ENCODE measurements at regions of chr4 and their contacts with region 1.

Region 1: DNA sequence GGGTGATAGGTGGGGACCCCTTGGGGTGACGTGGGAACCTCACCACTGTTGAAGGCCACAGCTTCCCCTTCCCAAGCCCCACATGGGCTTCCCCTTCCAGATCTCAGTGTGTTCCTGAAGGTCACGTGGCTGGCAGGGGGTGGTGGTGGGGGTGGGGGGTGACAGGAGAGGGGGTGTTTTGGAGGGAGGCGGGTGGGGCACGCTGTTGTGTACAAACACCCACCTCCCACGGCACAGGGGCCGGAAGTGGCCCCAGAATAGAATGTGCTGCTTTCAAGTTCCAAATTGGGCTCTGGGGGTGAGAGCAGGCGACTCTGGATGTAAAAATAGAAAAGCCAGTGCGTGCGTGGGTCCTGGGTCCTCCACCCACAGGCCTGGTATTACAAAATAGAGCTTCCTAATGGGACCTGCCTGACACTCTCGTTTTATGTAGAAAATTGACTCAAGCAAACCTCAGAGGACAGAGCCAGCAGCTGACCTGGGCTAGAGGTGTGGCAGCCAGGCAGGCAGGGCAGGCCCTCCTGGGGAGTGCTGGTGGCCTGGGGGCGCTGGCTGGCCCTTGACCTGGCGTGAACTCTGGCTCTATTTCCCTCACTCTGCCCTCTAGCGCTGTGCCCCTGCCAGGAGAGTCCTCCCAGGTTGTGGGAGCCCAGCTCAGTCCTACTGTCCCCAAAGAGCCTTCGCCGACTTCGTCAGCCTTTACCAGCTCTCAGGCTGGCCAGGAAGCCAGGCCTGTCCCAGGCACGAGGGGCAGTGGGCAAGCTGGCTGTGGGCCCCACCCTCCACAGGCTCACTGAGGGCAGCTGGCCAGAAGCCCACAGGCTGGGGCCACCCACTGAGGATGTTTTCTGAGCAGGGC is 5.4 kb upstream of the SH3BP2 start:
- DNase-seq: peak; percentile 85
- H3K4me3 Mint-ChIP-seq: peak overlapping the region; percentile 56
- H3K27ac Mint-ChIP-seq: peak overlapping the region; percentile 93
- H3K4me1 Mint-ChIP-seq: peaks cover 33% of the 10 kb centered on the region
- H3K27me3 Mint-ChIP-seq: peaks cover 4% of the 10 kb centered on the region

Region 2: GRCh38 chr4:2755837-2756694 is 31.4 kb before region 1 on chr4 and contains the start of gene TNIP2:
- intact Hi-C with region 1: no loop called
- DNase-seq: peak; percentile 93
- H3K4me3 Mint-ChIP-seq: peak within 1 kb of the TSS; percentile 90
- H3K27ac Mint-ChIP-seq: peak within 1 kb of the TSS; percentile 81
- H3K4me1 Mint-ChIP-seq: peaks cover 31% of the 10 kb centered on the region
- H3K27me3 Mint-ChIP-seq: no peaks in the 10 kb centered on the region
- total RNA-seq, gene TNIP2: 98.7 and 99.6 TPM in 2 replicates

Region 3: DNA sequence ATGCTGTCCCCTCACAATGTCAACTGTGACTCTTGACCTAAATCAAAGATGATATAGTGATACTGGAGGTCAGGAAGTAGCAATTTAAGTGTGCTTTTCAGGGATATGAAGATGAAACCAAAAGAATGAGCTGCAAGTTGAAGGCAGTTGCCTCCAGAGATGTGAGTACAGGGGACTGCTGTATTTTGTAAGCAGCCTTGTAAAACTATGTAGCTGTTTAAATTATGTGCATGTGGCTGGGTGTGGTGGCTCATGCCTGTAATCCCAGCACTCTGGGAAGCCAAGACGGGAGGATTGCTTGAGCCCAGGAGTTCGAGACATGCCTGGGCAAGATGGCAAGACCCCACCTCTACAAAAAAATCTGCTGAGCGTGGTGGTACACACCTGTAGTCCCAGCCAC is 16.2 kb before region 1 on chr4:
- intact Hi-C with region 1: loop called (anchors 2 kb)
- DNase-seq: no peak
- H3K4me3 Mint-ChIP-seq: no peak overlapping the region
- H3K27ac Mint-ChIP-seq: no peak overlapping the region
- H3K4me1 Mint-ChIP-seq: peaks cover 9% of the 10 kb centered on the region
- H3K27me3 Mint-ChIP-seq: no peaks in the 10 kb centered on the region

Region 4: DNA sequence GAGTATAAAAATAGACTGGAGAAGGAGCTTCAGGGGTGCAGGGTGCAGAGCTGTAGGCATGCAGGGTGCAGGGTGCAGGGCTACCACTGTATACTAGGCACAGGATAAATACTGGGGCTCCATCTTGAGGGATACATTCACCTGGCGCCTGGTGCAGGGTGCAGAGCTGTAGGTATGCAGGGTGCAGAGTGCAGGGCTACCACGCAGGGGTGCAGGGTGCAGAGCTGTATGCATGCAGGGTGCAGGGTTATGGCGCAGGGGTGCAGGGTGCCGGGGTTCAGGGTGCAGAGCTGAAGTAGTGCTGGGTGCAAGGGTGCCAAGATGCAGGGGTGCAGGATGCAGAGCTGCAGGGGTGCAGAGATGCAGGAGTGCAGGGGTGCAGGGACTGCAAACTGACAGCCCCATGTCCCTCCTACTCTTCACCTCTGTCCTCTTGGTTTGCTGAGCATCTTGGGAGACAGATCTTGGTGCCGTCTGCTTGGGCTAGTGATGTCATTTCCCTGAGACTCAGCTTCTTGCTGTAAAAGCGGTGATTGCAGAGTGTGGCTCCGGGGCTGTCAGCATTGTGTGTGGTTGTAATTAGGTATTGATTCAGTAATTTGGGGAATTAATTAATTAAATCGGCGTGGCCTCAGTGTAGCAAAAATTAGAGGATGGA is 1069.9 kb after region 1 on chr4:
- intact Hi-C with region 1: no loop called
- DNase-seq: no peak
- H3K4me3 Mint-ChIP-seq: no peak overlapping the region
- H3K27ac Mint-ChIP-seq: no peak overlapping the region
- H3K4me1 Mint-ChIP-seq: no peaks in the 10 kb centered on the region
- H3K27me3 Mint-ChIP-seq: no peaks in the 10 kb centered on the region